ENCODE measurements at regions of chrX and their contacts with region 1.

Region 1: DNA sequence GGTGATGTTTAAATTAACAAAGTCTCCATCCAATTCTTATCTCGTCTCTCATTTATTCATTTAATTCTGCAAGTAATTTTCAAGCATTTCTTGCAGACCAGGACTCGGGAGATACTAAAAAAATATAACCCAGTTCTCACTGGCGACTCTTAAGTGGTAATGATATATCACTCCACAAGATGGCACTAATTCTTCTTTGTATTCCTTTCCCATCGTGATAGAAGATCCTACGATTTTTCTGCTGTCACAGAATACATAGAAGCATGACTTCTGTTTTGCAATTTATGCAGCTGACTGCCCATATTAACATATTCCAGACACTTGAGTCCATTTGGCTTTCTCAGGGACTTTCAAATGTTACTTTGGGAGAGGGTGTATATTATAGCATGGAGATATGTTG is 64.0 kb upstream of the FGF13 start:
- DNase-seq: no peak
- ATAC-seq: no peak
- H3K4me3 ChIP-seq: no peak overlapping the region
- H3K27ac ChIP-seq: no peak overlapping the region
- H3K4me1 ChIP-seq: no peaks in the 10 kb centered on the region
- H3K27me3 ChIP-seq: peaks cover 0 to 4% (median 0%) of the 10 kb centered on the region in 9 donors
- CTCF ChIP-seq: peak in 10 of 12 donors; percentile 13 to 49 (median 38)
- POLR2A ChIP-seq: no peak

Region 2: DNA sequence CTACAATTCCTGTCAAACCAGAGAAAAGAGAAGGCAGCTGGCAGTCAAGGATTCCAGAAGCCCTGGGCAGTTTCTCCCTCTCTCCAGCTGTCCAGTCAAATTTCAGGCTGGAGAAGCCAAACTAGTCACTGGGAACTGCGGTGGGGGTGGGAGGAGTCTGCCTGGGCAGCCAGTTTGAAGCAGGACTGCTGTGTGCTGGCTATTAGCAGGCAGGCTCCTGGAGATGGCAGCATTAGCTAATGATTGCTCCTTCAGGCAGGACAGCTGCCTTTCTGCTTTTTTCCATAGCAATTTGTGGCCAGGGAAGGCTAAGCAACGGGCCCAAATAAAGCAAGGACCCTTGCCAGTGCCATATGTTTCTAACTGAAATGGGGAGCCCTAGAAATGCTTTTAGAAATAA is 19.3 kb before region 1 on chrX:
- intact Hi-C with region 1: no loop called
- DNase-seq: peak in 4 of 5 donors; percentile 5 to 26 (median 19)
- ATAC-seq: peak in 3 of 4 donors; percentile 64 to 77 (median 76)
- H3K4me3 ChIP-seq: no peak overlapping the region
- H3K27ac ChIP-seq: no peak overlapping the region
- H3K4me1 ChIP-seq: no peaks in the 10 kb centered on the region
- H3K27me3 ChIP-seq: peaks cover 0 to 17% (median 0%) of the 10 kb centered on the region in 9 donors
- CTCF ChIP-seq: peak in 6 of 12 donors; percentile 13 to 40 (median 24)
- POLR2A ChIP-seq: no peak

Region 3: GRCh38 chrX:139429913-139430312 is 654.4 kb after region 1 on chrX:
- intact Hi-C with region 1: loop called in 1 of 10 experiments (anchors 10 kb)
- DNase-seq: no peak
- ATAC-seq: no peak
- H3K4me3 ChIP-seq: no peak overlapping the region
- H3K27ac ChIP-seq: no peak overlapping the region
- H3K4me1 ChIP-seq: no peaks in the 10 kb centered on the region
- H3K27me3 ChIP-seq: no peaks in the 10 kb centered on the region
- CTCF ChIP-seq: peak in 5 of 12 donors; percentile 8 to 19 (median 12)
- POLR2A ChIP-seq: no peak

Region 4: GRCh38 chrX:139559383-139560042 is 784.0 kb after region 1 on chrX:
- intact Hi-C with region 1: loop called in 7 of 10 experiments (anchors 5 to 10 kb)
- DNase-seq: peak in 1 of 5 donors; percentile 16
- ATAC-seq: peak in 1 of 4 donors; percentile 70
- H3K4me3 ChIP-seq: no peak overlapping the region
- H3K27ac ChIP-seq: no peak overlapping the region
- H3K4me1 ChIP-seq: no peaks in the 10 kb centered on the region
- H3K27me3 ChIP-seq: peaks cover 0 to 22% (median 0%) of the 10 kb centered on the region in 9 donors
- CTCF ChIP-seq: peak; percentile 23 to 53 (median 40)
- POLR2A ChIP-seq: no peak

Region 5: DNA sequence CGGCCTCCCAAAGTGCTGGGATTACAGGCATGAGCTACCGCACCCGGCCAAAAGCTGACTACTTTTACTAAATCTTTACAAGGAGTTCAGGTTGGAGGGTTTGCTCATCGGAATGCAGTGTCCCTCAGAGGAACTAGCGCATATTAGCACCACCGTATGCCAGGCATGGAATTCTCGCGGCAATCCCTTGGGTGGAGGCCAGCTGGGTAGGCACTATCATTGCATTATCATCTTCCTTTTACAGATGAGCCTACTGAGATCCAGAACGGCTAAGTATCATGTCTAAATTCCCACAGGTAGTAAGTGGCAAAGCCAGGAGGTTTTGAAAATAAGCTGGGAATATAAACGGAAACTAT is 1195.9 kb after region 1 on chrX:
- intact Hi-C with region 1: loop called in 1 of 10 experiments (anchors 10 kb)
- DNase-seq: no peak
- ATAC-seq: no peak
- H3K4me3 ChIP-seq: no peak overlapping the region
- H3K27ac ChIP-seq: no peak overlapping the region
- H3K4me1 ChIP-seq: no peaks in the 10 kb centered on the region
- H3K27me3 ChIP-seq: peaks cover 0 to 24% (median 0%) of the 10 kb centered on the region in 9 donors
- CTCF ChIP-seq: no peak
- POLR2A ChIP-seq: no peak

Measured in heart left ventricle (tissue), 16 donors.